ENCODE measurements at regions of chr17 and their contacts with region 1.

Region 1: DNA sequence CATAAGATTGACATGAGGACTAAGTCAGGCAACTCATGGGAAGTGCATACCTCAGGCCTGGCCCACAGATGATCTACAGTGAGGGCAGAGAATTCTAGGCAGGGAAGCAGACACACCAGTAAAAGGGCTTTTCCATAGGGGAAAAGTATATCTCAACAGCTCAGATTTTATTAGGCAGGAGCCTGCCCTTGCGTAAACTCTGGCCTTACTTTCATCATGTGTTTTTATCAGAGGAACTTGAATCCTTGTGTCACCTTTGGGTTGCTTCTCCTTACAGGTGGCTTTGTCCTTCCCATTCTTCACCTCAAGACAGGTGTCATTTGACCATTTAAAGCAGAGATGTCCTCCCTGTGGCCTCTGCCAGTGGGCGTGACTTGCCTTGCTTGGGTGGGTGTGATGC is 138.1 kb downstream of the MSI2 start:
- DNase-seq: no peak
- ATAC-seq: no peak
- H3K4me3 ChIP-seq: no peak overlapping the region
- H3K27ac ChIP-seq: no peak overlapping the region
- H3K4me1 ChIP-seq: peaks cover 0 to 6% (median 0%) of the 10 kb centered on the region in 12 donors
- H3K27me3 ChIP-seq: no peaks in the 10 kb centered on the region
- CTCF ChIP-seq: no peak
- POLR2A ChIP-seq: no peak

Region 2: GRCh38 chr17:57366558-57367351 is 27.6 kb before region 1 on chr17:
- intact Hi-C with region 1: no loop called
- DNase-seq: peak in 4 of 5 donors; percentile 17 to 70 (median 54)
- ATAC-seq: peak; percentile 70 to 83 (median 76)
- H3K4me3 ChIP-seq: peak overlapping the region in 2 of 12 donors; percentile 6 to 12
- H3K27ac ChIP-seq: peak overlapping the region; percentile 22 to 84 (median 65)
- H3K4me1 ChIP-seq: peaks cover 0 to 71% (median 50%) of the 10 kb centered on the region in 12 donors
- H3K27me3 ChIP-seq: no peaks in the 10 kb centered on the region
- CTCF ChIP-seq: no peak
- POLR2A ChIP-seq: no peak

Region 3: DNA sequence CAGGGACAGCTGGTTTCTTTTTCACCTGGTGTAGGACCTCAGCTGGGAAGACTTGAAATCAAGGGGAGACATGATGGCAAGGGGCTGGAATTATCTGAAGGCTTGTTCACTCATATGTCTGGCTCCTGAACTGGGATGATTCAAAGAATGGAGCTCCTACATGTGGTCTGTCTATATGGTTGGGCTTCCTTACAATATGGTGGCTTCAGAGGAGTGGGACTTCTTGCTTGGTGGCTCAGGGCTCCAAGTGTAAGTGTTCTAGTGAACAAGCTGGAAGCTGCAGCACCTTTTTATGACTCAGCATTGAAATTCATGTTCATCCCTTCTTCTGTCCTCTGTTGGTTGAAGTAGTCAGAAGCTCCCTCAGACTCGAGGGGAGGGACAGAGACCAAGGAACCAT is 10.2 kb before region 1 on chr17:
- intact Hi-C with region 1: loop called in 1 of 10 experiments (anchors 1 kb)
- DNase-seq: no peak
- ATAC-seq: no peak
- H3K4me3 ChIP-seq: no peak overlapping the region
- H3K27ac ChIP-seq: no peak overlapping the region
- H3K4me1 ChIP-seq: peaks cover 0 to 30% (median 15%) of the 10 kb centered on the region in 12 donors
- H3K27me3 ChIP-seq: no peaks in the 10 kb centered on the region
- CTCF ChIP-seq: no peak
- POLR2A ChIP-seq: no peak